Left cardiac atrium (tissue), 4 donors: ENCODE measurements at regions of chr7 and their contacts with region 1.

Region 1: GRCh38 chr7:29035044-29035740 is 77.1 kb upstream of the TRIL start:
- DNase-seq: no peak
- ATAC-seq: peak; percentile 20 to 81

Region 2: DNA sequence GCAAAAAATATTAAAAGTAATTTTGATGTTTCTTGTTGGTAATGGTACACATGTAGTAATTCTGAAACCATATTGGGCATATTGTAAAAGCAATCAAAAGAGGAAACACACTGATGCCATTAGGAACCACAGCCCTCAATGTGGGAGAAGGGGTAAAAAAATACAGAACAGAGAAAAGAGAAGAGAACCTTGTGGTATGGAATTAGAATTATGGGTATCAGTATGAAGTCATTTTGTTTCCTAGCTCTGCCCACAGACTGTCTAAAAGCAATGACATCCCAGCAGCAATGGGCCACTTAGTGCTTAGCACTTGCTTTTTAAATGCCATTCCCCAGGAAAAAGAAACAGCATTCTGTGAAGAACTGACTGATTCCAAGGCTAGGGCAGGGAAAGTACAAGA is 49.6 kb after region 1 on chr7:
- intact Hi-C with region 1: loop called in 1 of 2 experiments (anchors 10 kb)
- DNase-seq: no peak
- ATAC-seq: peak in 1 of 2 donors; percentile 51

Region 3: DNA sequence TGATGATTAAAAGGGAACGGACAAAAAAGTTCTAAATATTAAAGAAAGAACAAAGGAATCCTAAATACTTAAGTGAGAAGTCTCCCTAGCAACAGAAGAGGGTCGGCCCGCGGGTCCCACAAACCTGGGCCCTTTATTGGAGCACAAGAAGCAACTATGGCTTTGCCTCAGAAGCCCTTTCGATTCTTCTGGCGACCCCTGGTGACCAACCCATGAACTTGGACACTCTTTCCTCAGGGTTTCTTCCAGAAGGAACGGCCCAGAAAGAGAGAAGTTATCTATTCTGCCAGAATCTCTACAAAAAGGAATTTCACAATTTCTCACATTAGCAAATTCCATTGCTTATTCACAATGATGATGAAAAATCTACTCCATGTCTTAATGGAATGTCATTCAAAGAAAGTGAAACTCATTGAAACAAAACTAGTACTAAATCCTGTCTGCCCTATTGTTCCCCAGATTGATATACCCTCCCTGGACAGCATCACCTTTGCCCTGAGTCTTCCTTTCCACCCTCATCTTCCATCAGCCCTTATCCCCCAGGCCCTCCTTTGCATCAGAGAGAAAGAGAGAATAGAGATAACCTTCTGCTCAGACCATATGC is 67.5 kb after region 1 on chr7:
- intact Hi-C with region 1: no loop called
- DNase-seq: peak; percentile 74
- ATAC-seq: peak; percentile 81 to 83